ENCODE measurements at regions of chr16 and their contacts with region 1.

Region 1: DNA sequence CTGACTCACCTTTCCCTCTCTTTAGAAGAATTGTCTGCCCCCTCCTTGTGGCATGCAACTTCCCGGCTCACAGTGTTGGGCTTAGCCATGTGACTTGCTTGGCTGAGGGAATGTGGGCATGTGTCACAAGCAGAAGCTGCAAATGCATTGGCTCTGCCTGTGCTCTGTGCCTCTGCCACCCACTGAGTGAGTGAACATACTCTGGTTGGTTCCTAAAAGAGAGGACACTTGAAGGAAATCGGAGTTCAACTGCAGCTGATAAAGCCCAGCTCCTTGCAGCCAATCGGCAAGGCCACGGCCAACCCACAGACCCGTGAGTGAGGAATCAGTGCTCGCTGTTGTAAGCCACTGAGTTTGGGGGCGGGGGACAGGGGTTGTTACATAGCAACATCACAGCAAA is 10.9 kb upstream of the GINS2 start:
- DNase-seq: peak in 9 of 10 donors; percentile 27 to 81 (median 66)
- H3K4me3 ChIP-seq: no peak overlapping the region
- H3K27ac ChIP-seq: peak overlapping the region in 1 of 59 donors; percentile 34
- H3K27me3 ChIP-seq: peaks cover 0 to 8% (median 0%) of the 10 kb centered on the region in 45 donors
- CTCF ChIP-seq: no peak

Region 2: DNA sequence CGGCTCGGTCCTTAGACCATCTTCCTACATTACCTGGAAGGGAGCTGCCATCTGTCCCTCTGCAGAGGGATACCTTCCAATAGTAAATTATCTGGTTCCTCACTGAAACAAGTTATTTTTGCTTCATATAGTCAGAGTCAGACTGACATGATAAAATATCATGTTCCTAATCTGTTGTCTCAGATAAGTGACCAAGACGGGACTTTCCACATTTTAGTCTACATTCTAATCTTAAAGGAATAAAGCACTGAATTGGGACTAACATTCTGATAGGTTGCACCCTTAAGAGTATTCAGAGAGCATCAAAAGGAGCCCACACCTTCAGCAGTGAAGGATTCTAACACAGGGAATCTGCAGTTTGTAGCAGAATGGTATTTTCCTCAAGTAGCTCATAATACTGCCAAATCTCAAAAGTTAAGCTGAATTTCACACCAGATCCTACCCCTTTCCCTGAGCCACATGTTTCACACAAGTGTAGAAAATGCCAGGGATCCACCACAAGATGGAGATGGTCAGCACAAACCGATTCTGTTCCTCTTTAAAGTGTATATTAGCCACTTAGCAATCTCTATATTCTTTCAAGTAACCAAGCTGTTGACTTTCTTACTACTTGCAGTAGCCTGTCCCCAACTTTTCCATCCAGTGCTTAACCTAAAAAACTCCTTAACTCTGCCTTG is 24.2 kb before region 1 on chr16:
- intact Hi-C with region 1: loop called in 1 of 2 experiments (anchors 2 kb)
- DNase-seq: peak in 1 of 10 donors; percentile 47
- H3K4me3 ChIP-seq: no peak overlapping the region
- H3K27ac ChIP-seq: no peak overlapping the region
- H3K27me3 ChIP-seq: no peaks in the 10 kb centered on the region
- CTCF ChIP-seq: peak in 51 of 56 donors; percentile 21 to 58 (median 45)

Region 3: DNA sequence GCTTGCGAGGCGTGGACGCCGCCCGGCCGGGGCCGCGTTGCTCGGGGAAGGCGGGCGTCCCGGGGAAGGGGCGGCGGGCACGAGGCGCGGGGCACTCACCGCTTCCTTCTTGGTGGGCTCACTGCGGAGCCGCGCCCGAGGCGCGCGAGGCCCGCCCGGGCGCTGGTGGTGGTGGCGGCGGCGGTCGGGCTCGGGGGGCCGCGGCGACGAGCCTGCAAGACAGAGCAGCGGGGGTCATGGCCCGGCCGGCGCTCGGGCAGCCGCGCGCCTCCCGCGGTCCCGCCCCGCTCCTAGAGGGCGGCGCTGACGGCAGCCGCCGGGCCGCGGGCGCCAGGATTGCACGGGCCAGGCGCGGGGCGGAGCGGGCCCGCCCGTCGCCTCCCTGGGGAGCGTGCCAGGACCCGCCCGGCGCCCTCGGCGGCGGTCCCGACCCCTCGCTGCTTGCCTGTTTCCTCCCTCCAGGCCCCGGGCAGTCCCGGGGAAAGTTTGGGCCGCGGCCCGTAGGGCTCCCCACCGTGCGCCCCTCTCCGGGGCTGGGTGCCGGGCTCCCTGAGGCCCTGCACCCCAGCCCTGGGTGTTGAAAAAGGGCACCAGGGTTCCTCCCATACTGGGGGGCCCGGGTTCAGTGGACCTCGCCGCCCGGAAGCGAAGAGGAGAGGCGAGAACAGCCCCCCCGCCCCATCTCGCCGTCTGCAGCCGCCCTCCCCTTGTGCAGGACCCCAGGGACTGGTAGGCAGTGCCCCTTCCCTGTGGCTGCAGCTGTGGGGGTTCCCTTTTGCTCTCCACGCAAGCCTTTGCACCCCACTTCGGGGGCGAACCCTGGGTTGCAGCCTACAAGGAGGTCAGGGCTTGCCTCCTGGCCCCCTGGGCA is 51.4 kb after region 1 on chr16 and contains the start of gene C16orf74:
- intact Hi-C with region 1: no loop called
- DNase-seq: no peak
- H3K4me3 ChIP-seq: peak within 1 kb of the TSS; percentile 7 to 67 (median 49)
- H3K27ac ChIP-seq: no peak within 1 kb of the TSS
- H3K27me3 ChIP-seq: peaks cover 0 to 44% (median 17%) of the 10 kb centered on the region in 45 donors
- CTCF ChIP-seq: no peak
- total RNA-seq, gene C16orf74: 0.72 to 5.6 (median 2.2) TPM in 119 of 120 experiments, not detected in the other

Region 4: DNA sequence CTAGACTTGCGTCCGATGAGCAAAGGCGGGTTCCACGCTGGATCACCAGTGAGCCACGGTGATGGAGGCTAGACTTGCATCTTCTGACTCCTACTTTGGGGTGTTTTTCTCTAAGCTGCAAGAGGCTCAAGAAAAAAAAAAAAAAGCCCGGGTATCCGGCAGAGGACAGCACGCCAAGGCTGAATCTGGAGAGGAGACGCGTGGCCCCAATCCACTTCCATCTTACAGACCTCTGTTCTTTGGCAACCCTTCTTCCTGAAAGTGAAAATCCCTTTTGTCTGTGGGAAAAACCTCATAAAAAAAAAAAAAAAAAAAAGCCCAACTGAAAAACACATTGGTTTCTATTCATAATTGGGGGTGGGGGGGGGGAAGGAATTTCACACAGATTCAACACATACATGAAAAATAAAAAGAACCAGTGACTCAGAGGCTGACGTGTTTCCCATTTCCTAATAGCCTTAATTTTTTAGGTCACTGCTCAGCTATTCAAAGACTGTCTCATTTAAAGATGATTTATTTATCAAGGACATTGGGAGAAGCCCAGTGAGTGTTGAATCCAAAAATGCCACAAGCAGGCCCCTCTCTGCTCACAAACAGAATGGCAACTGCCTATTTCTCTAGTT is 1137.0 kb after region 1 on chr16:
- intact Hi-C with region 1: no loop called
- DNase-seq: no peak
- H3K4me3 ChIP-seq: no peak overlapping the region
- H3K27ac ChIP-seq: no peak overlapping the region
- H3K27me3 ChIP-seq: no peaks in the 10 kb centered on the region
- CTCF ChIP-seq: no peak

Measured in dorsolateral prefrontal cortex (tissue), 120 donors.